PC-3 (cell line): ENCODE measurements at regions of chrX and their contacts with region 1.

Region 1: DNA sequence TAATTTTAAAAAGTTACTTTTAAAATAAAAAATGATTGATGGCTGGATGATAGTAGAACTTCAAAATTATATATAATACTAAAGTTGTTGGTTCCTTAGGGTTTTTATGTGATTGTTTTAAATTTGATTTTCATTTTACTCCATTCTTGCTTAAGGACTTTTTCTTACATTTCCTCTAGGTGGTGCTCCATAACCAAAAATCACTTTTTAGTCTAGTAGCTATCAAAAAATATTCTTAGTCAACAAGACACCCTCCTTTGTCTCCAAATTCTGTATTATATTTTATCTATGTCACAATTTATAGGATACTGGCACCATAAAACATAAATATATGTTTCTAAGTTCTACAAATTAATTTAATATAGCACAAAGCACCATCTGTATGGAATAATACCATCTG is 67.2 kb upstream of the BRWD3 start:
- DNase-seq: peak; percentile 56
- ATAC-seq: no peak
- H3K4me3 ChIP-seq: no peak overlapping the region
- H3K27ac ChIP-seq: no peak overlapping the region
- H3K4me1 ChIP-seq: peaks cover 12% of the 10 kb centered on the region
- H3K27me3 ChIP-seq: no peaks in the 10 kb centered on the region
- CTCF ChIP-seq: peak; percentile 59

Region 2: DNA sequence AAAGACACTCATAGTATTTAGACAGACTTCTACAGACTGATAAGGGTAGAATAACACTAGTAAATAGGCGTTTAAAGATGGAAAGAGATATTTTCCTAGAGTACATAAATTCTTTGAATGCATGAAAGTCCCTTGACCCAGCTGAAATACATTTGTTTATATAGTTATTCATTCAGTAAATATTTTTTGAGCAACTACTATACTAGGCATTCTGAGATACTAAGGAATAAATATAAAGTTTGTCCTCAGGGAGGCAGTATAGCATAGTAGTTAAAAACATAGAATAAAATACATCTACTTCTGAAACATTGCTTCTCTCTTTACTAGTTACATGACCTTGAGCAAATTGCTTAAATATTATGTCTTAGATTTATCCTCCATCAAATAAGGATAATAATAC is 297.4 kb after region 1 on chrX:
- CTCF ChIA-PET with region 1: no interaction called
- POLR2A ChIA-PET with region 1: no interaction called
- intact Hi-C with region 1: loop called (anchors 5 kb)
- DNase-seq: peak; percentile 71
- ATAC-seq: peak; percentile 79
- H3K4me3 ChIP-seq: no peak overlapping the region
- H3K27ac ChIP-seq: no peak overlapping the region
- H3K4me1 ChIP-seq: no peaks in the 10 kb centered on the region
- H3K27me3 ChIP-seq: no peaks in the 10 kb centered on the region
- CTCF ChIP-seq: peak; percentile 59